ENCODE measurements at regions of chr3 and their contacts with region 1.

Region 1: GRCh38 chr3:138915503-138916498 is 31.1 kb downstream of the FOXL2 start:
- DNase-seq: peak; percentile 90 to 94
- H3K4me3 ChIP-seq: peak overlapping the region; percentile 62
- H3K4me3 Mint-ChIP-seq: peak overlapping the region; percentile 73
- H3K27ac Mint-ChIP-seq: peak overlapping the region; percentile 30
- H3K4me1 ChIP-seq: 0 out of 2 replicates have a peak, but pooled peaks cover 3% of the 10 kb centered on the region
- H3K4me1 Mint-ChIP-seq: no peaks in the 10 kb centered on the region
- H3K27me3 ChIP-seq: no peaks in the 10 kb centered on the region
- H3K27me3 Mint-ChIP-seq: no peaks in the 10 kb centered on the region
- CTCF ChIP-seq: peak; percentile 84 to 93

Region 2: DNA sequence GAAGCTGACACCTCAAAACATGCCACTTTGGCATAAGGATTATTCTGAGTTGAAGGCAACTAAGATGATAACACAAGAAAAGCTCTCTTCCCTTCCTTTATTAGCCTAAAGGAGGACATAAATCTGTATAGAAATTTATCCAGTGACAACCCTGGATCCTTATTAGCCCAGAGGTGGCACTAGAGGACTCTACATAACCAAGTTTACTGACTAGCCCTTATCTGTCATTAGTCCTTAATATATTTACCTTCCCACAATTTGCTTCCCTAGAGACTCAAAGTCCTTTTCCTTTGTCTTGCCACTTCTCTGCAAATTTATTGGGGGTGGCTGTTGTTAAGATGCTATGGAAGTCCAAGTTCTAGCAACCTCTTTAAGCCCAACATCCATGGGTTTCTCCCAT is 348.4 kb before region 1 on chr3:
- CTCF ChIA-PET with region 1: interaction called, 8 read pairs
- POLR2A ChIA-PET with region 1: no interaction called
- intact Hi-C with region 1: loop called (anchors 1 kb)
- DNase-seq: peak in 1 of 2 experiments; percentile 20
- H3K4me3 ChIP-seq: no peak overlapping the region
- H3K4me3 Mint-ChIP-seq: no peak overlapping the region
- H3K27ac Mint-ChIP-seq: no peak overlapping the region
- H3K4me1 ChIP-seq: peaks cover 11% of the 10 kb centered on the region; the same call in 1 of the 2 replicates
- H3K4me1 Mint-ChIP-seq: peaks cover 13% of the 10 kb centered on the region
- H3K27me3 ChIP-seq: no peaks in the 10 kb centered on the region
- H3K27me3 Mint-ChIP-seq: no peaks in the 10 kb centered on the region
- CTCF ChIP-seq: peak; percentile 12 to 52

Region 3: DNA sequence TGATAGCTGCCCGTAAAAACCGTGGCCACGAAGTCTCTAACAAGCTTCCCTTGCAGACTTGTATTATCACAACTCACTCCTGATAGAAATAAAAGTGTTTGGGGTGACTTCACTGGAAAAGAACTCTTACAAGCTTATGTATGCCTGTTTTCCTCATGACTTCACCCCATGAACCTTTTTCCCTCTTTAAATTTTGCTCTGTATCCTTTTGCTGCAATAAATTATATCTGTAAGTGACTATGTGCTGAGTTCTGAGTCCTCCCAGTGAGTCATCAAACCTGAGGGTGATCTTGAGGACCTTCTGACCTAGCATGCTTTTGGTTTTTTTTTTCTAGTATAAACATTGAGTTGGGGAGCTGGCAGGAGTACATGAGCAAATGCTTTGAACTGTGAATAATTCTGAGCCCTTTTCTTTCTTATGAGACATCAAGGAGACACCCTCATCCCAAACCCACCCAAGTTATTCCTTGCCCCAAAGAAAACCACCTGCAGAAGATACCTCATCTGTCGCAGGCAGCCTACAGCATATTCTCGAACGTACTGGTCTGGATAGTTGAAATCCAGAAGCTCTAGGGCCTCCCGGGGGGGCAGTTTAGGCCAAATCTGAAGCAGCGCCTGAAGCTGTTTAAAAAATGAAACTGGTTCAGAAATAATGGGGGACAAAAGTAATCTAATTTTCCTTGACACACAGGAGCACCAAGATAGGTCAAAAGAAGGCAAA is 221.4 kb before region 1 on chr3:
- CTCF ChIA-PET with region 1: interaction called, 30 read pairs
- POLR2A ChIA-PET with region 1: no interaction called
- intact Hi-C with region 1: loop called (anchors 1 kb)
- DNase-seq: no peak
- H3K4me3 ChIP-seq: no peak overlapping the region
- H3K4me3 Mint-ChIP-seq: no peak overlapping the region
- H3K27ac Mint-ChIP-seq: no peak overlapping the region
- H3K4me1 ChIP-seq: no peaks in the 10 kb centered on the region
- H3K4me1 Mint-ChIP-seq: peaks cover 12% of the 10 kb centered on the region
- H3K27me3 ChIP-seq: no peaks in the 10 kb centered on the region
- H3K27me3 Mint-ChIP-seq: no peaks in the 10 kb centered on the region
- CTCF ChIP-seq: no peak

Region 4: GRCh38 chr3:138834359-138835212 is 81.2 kb before region 1 on chr3 and contains the start of gene PIK3CB:
- CTCF ChIA-PET with region 1: interaction called, 18 read pairs
- POLR2A ChIA-PET with region 1: interaction called, 6 read pairs
- intact Hi-C with region 1: loop called (anchors 1 kb)
- DNase-seq: peak; percentile 88 to 95
- H3K4me3 ChIP-seq: peak within 1 kb of the TSS; percentile 87
- H3K4me3 Mint-ChIP-seq: peak within 1 kb of the TSS; percentile 86
- H3K27ac Mint-ChIP-seq: peak within 1 kb of the TSS; percentile 92
- H3K4me1 ChIP-seq: peaks cover 7% of the 10 kb centered on the region; the same call in 1 of the 2 replicates
- H3K4me1 Mint-ChIP-seq: peaks cover 4% of the 10 kb centered on the region
- H3K27me3 ChIP-seq: no peaks in the 10 kb centered on the region
- H3K27me3 Mint-ChIP-seq: no peaks in the 10 kb centered on the region
- CTCF ChIP-seq: peak in 1 of 2 experiments; percentile 69
- total RNA-seq, gene PIK3CB: 29.7 and 31.5 TPM in 2 replicates

Region 5: GRCh38 chr3:138890555-138891187 is 25.1 kb before region 1 on chr3:
- CTCF ChIA-PET with region 1: no interaction called
- POLR2A ChIA-PET with region 1: no interaction called
- intact Hi-C with region 1: no loop called
- DNase-seq: no peak
- H3K4me3 ChIP-seq: no peak overlapping the region
- H3K4me3 Mint-ChIP-seq: no peak overlapping the region
- H3K27ac Mint-ChIP-seq: no peak overlapping the region
- H3K4me1 ChIP-seq: no peaks in the 10 kb centered on the region
- H3K4me1 Mint-ChIP-seq: no peaks in the 10 kb centered on the region
- H3K27me3 ChIP-seq: no peaks in the 10 kb centered on the region
- H3K27me3 Mint-ChIP-seq: no peaks in the 10 kb centered on the region
- CTCF ChIP-seq: no peak

Region 6: GRCh38 chr3:138935848-138936740 is 20.3 kb after region 1 on chr3:
- CTCF ChIA-PET with region 1: interaction called, 19 read pairs
- POLR2A ChIA-PET with region 1: no interaction called
- intact Hi-C with region 1: no loop called
- DNase-seq: peak; percentile 66 to 88
- H3K4me3 ChIP-seq: peak overlapping the region; percentile 60
- H3K4me3 Mint-ChIP-seq: peak overlapping the region; percentile 92
- H3K27ac Mint-ChIP-seq: peak overlapping the region; percentile 46
- H3K4me1 ChIP-seq: no peaks in the 10 kb centered on the region
- H3K4me1 Mint-ChIP-seq: no peaks in the 10 kb centered on the region
- H3K27me3 ChIP-seq: no peaks in the 10 kb centered on the region
- H3K27me3 Mint-ChIP-seq: no peaks in the 10 kb centered on the region
- CTCF ChIP-seq: peak; percentile 82 to 92

Region 7: GRCh38 chr3:138960417-138960852 is 44.6 kb after region 1 on chr3:
- CTCF ChIA-PET with region 1: no interaction called
- POLR2A ChIA-PET with region 1: no interaction called
- intact Hi-C with region 1: no loop called
- DNase-seq: no peak
- H3K4me3 ChIP-seq: no peak overlapping the region
- H3K4me3 Mint-ChIP-seq: no peak overlapping the region
- H3K27ac Mint-ChIP-seq: no peak overlapping the region
- H3K4me1 ChIP-seq: no peaks in the 10 kb centered on the region
- H3K4me1 Mint-ChIP-seq: no peaks in the 10 kb centered on the region
- H3K27me3 ChIP-seq: no peaks in the 10 kb centered on the region
- H3K27me3 Mint-ChIP-seq: peaks cover 25% of the 10 kb centered on the region
- CTCF ChIP-seq: no peak

Region 8: GRCh38 chr3:139020868-139021234 is 105.0 kb after region 1 on chr3 and contains the start of gene PRR23B:
- CTCF ChIA-PET with region 1: no interaction called
- POLR2A ChIA-PET with region 1: no interaction called
- intact Hi-C with region 1: no loop called
- DNase-seq: no peak
- H3K4me3 ChIP-seq: no peak within 1 kb of the TSS
- H3K4me3 Mint-ChIP-seq: no peak within 1 kb of the TSS
- H3K27ac Mint-ChIP-seq: no peak within 1 kb of the TSS
- H3K4me1 ChIP-seq: no peaks in the 10 kb centered on the region
- H3K4me1 Mint-ChIP-seq: no peaks in the 10 kb centered on the region
- H3K27me3 ChIP-seq: no peaks in the 10 kb centered on the region
- H3K27me3 Mint-ChIP-seq: peaks cover 6% of the 10 kb centered on the region
- CTCF ChIP-seq: no peak
- total RNA-seq, gene PRR23B: not detected in 2 replicates